ENCODE measurements at regions of chr22 and their contacts with region 1.

Region 1: DNA sequence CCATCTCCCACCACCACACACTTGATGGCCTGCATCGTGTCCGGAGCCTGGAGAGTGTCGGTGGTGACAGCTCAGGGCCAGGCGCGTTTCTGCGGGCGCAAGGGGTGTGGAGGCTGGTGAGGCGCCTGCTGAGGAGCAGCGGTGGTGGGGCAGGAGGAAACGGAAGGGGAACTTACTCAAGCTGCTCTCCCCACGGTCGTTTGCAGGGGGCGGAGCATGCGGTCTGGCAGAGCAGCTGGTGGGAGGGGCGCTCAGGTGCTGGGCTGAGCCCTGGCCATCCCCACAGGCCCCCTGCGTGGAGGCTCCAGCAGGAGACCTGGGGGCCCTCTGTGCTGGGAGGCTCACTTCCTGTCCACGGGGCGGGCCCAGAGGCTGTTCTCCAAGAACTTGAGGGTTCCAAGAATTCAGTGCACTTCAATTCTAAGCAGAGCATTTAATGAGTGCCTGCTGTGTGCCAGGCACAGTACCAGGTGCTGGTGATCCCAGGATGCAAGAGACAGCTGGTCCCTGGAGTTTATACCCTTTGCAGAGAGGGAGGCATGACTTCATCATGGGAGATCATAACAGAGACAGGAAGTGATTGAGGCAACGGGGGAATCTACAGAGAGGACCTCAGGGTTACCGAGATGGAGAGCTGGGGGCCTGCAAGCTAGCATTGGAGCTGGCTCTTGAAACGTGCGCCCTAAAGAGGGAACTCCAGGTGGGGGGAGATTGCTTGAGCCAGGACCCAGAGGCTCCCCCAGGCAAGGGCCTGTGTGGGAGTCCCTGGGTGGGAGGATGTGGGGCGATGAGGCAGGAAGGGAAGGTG is at the start of gene RAC2:
- DNase-seq: peak; percentile 71 to 95 (median 90)
- ATAC-seq: peak; percentile 54
- H3K4me3 ChIP-seq: peak within 1 kb of the TSS; percentile 79 to 98
- H3K4me3 Mint-ChIP-seq: peak within 1 kb of the TSS; percentile 98
- H3K27ac ChIP-seq: peak within 1 kb of the TSS; percentile 81
- H3K27ac Mint-ChIP-seq: peak within 1 kb of the TSS; percentile 100
- H3K4me1 ChIP-seq: peaks cover 45% of the 10 kb centered on the region
- H3K4me1 Mint-ChIP-seq: peaks cover 55% of the 10 kb centered on the region
- H3K27me3 ChIP-seq: no peaks in the 10 kb centered on the region
- H3K27me3 Mint-ChIP-seq: no peaks in the 10 kb centered on the region
- CTCF ChIP-seq: no peak
- total RNA-seq, gene RAC2: 152 to 159 TPM

Region 2: DNA sequence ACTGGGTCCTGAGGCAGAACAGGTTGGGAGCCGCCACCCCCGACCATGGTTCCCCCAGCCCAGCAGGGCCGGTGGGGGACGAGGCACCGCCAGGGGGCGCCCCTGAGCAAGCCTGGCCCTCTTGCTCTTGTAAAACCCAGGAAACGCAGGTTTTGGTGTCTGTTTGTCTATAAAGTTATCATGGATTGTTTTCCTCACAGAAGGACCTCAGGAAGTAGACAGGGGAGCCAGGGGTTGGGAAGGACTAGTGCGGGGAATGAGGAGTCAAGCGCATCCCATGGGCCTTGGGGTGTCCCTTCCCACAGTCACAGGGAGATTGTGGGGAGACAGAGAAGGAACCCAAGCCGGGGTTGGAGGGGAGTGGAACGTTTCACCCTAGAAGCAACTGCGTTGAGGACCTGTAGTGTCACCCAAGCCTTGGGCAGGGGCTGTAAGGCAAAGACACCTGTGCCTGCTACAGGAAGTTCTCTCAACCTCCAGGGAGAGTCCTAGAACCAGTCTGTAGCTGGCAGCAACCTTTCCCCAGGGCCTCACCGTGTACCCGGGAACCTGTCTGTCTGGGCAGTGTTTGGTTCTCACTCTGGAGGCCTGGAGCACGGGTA is 166.3 kb before region 1 on chr22:
- CTCF ChIA-PET with region 1: no interaction called
- POLR2A ChIA-PET with region 1: no interaction called
- intact Hi-C with region 1: loop called in 1 of 2 experiments (anchors 2 kb)
- DNase-seq: peak; percentile 68 to 93 (median 83)
- ATAC-seq: peak; percentile 14
- H3K4me3 ChIP-seq: no peak overlapping the region
- H3K4me3 Mint-ChIP-seq: peak overlapping the region; percentile 47
- H3K27ac ChIP-seq: peak overlapping the region in 1 of 2 experiments; percentile 51
- H3K27ac Mint-ChIP-seq: peak overlapping the region; percentile 99
- H3K4me1 ChIP-seq: peaks cover 39% of the 10 kb centered on the region
- H3K4me1 Mint-ChIP-seq: peaks cover 31% of the 10 kb centered on the region
- H3K27me3 ChIP-seq: no peaks in the 10 kb centered on the region
- H3K27me3 Mint-ChIP-seq: peaks cover 3% of the 10 kb centered on the region
- CTCF ChIP-seq: peak; percentile 98

Region 3: DNA sequence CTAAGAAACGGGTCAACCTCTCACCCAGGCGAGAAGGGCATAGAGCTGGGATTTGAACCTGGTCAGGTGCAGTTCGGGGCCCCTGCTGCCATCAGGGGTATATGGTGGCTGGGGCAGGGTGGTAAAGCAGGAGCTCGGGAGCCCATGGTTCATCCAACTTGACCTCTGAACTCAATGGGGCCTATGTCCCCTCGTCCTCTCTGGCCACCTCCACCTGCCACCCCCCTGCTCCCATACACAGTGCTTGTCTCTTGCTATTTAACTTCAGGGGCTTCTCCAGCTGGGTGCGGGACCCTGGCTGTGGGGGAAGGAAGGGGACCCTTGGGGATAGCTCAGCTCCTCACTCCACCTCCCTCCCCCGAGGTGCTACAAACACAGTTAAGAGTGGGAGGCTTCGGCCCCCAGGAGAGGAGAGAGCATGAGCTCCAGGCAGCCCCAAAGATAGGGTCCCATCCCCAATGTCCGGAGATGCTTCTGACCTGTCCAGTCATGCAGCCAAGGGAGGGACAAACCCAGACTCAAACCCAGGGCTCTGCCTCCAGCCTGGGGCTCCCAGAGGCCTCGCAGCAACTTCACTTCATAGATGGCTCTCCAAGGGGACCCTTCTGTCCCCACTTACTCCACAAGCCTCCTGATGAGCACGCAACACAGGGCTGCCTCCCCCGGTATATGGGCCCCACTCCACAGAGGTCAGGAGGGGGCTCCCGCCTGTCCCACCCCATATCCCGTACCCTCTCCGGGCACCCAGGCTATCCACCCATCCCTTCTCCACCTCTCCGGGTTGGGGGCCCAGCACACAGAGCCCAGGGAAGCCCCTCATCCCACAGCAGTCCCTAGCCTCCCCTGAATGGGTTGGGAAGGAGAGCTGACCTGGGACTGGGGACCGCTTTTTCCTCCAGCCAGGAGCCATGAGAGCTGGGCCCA is 95.3 kb before region 1 on chr22:
- CTCF ChIA-PET with region 1: no interaction called
- POLR2A ChIA-PET with region 1: interaction called, 20 read pairs
- intact Hi-C with region 1: no loop called
- DNase-seq: peak in 1 of 9 experiments; percentile 36
- ATAC-seq: no peak
- H3K4me3 ChIP-seq: peak overlapping the region; percentile 91 to 98
- H3K4me3 Mint-ChIP-seq: peak overlapping the region; percentile 96
- H3K27ac ChIP-seq: peak overlapping the region; percentile 84 to 94
- H3K27ac Mint-ChIP-seq: peak overlapping the region; percentile 96
- H3K4me1 ChIP-seq: peaks cover 60% of the 10 kb centered on the region
- H3K4me1 Mint-ChIP-seq: peaks cover 61% of the 10 kb centered on the region
- H3K27me3 ChIP-seq: no peaks in the 10 kb centered on the region
- H3K27me3 Mint-ChIP-seq: no peaks in the 10 kb centered on the region
- CTCF ChIP-seq: no peak

Region 4: DNA sequence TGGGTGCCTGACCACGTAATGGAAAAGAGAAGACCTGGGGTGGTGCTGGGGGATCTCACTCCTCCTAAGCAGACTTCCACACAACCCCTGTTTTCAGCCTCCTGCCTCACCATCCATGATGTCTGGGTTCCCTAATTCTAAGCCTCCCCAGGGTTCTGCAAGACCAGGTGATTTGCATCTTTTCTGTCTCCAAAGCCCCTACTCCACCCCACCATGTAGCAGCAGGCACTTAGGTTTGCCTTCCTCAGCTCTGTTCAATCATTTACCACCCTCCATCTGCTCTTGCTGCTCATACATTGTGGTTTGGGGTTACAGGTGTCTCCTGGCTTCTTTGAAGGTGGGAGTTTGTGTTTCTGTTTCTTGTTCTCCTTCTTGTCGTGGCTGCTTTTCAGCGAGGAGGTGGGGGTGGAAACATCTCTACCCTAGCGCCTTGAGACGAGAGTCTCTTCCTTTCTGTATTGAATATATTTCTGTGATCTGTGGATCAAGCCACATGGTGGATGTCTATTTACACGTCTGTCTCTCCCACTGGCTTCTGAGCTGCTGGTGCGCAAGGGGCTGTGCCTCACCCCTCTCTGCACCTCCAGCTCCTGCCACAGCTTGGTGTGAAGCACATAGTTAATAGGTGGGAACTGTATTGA is 25.4 kb before region 1 on chr22:
- CTCF ChIA-PET with region 1: interaction called, 29 read pairs
- POLR2A ChIA-PET with region 1: interaction called, 118 read pairs
- intact Hi-C with region 1: loop called (anchors 1 to 2 kb)
- DNase-seq: peak in 8 of 9 experiments; percentile 43 to 92 (median 78)
- ATAC-seq: peak; percentile 79
- H3K4me3 ChIP-seq: peak overlapping the region; percentile 23 to 52
- H3K4me3 Mint-ChIP-seq: peak overlapping the region; percentile 74
- H3K27ac ChIP-seq: peak overlapping the region; percentile 54 to 60
- H3K27ac Mint-ChIP-seq: peak overlapping the region; percentile 95
- H3K4me1 ChIP-seq: peaks cover 79% of the 10 kb centered on the region
- H3K4me1 Mint-ChIP-seq: peaks cover 90% of the 10 kb centered on the region
- H3K27me3 ChIP-seq: no peaks in the 10 kb centered on the region
- H3K27me3 Mint-ChIP-seq: no peaks in the 10 kb centered on the region
- CTCF ChIP-seq: no peak

Region 5: DNA sequence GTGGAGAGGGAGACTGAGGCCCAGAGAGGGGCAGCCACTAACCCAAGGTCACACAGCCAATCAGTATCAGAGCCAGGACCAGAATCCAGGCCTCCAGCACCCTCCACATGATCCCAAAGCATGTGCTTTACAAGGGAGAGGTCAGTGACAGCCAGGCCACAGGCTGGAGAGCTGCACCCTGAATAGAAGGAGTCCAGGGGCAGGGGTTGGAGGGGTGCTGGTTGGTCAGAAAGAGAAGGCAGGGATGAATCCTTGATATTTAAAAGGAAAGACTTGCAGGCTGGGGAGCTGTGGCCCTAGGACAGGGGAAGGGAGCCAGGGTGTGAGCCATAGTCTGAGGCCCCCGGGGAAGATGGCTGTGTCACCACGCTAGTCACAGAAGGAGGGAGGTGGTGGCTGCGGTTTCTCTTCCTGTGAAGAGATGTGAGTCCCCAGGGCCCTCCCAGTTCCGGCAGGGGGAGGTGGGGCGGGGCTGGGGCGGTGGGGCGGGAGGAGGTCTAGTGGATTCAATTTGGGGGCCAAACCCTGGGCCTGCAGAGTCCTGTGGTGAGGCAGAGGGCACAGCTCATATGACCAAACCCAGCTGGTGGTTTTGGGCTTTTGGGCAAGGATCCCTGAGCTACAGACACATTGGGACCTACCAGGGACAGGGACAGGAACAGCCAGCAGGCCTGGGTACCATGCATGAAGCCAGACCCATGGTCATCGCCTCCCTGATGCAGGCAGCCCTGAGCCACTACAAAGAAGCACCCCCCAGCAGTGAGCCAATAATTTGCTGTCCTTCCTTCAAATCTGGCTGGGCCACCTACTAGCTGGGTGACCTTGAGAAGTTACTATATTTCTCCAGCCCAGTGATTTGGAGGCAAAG is 14.3 kb before region 1 on chr22:
- CTCF ChIA-PET with region 1: interaction called, 71 read pairs
- POLR2A ChIA-PET with region 1: interaction called, 194 read pairs
- intact Hi-C with region 1: loop called (anchors 1 kb)
- DNase-seq: peak; percentile 80 to 97 (median 91)
- ATAC-seq: peak; percentile 68
- H3K4me3 ChIP-seq: peak overlapping the region; percentile 36 to 52
- H3K4me3 Mint-ChIP-seq: peak overlapping the region; percentile 80
- H3K27ac ChIP-seq: peak overlapping the region; percentile 75 to 92
- H3K27ac Mint-ChIP-seq: peak overlapping the region; percentile 100
- H3K4me1 ChIP-seq: peaks cover 94% of the 10 kb centered on the region
- H3K4me1 Mint-ChIP-seq: peaks cover 91% of the 10 kb centered on the region
- H3K27me3 ChIP-seq: no peaks in the 10 kb centered on the region
- H3K27me3 Mint-ChIP-seq: no peaks in the 10 kb centered on the region
- CTCF ChIP-seq: no peak

Measured in CD8-positive, alpha-beta T cell (primary cell).